B cell (primary cell): ENCODE measurements at regions of chr12 and their contacts with region 1.

Region 1: DNA sequence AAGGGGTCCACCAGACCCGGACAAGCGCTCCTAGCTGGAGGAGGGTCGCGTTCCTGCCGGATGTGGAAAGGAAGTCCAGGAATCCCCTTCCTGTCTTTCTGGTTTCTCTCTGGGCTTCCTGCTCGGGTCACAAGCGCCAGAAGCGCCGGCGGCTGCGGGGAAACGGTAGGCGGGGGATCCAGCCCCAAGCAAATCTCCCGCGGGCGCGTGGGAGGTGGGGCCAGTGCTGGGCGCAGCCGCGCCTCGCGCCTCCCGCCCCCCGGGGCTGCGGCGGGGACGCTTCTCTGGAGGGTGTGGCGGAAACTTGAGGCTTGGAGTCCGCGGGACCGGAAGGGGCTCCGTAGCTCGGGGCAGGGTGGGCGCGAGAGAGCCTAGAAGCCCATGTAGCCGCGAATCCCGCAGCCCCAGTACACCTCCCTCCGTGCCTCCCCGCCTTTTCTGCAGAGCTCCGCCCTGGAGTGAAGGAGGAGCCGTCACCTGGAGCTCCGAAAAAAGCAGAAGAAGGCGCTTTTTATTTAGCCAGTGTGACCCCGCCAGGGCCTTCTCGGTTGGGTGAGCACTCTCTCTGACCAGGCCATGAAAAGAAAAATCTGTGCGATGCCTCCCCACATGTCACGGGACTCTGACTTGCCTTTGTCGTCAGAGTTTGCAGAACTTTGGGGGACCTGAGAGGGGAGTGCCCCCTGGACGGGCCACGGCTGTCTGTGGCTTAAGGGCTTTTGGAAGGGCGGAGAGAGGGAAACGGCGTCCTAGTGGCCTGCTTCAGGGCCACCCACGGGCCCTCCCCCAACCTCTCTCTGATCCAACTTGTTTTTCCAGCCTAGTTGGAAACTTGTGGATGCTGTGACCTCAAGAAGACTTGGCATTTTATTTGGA is 21.4 kb upstream of the CLEC2D start:
- DNase-seq: peak; percentile 97
- ATAC-seq: peak; percentile 71
- H3K4me3 ChIP-seq: peak overlapping the region; percentile 72 to 99 (median 83)
- H3K4me3 Mint-ChIP-seq: peak overlapping the region; percentile 98
- H3K27ac ChIP-seq: peak overlapping the region; percentile 92 to 98
- H3K27ac Mint-ChIP-seq: peak overlapping the region; percentile 86
- H3K4me1 ChIP-seq: peaks cover 34% of the 10 kb centered on the region in 2 donors
- H3K4me1 Mint-ChIP-seq: peaks cover 52% of the 10 kb centered on the region
- H3K27me3 ChIP-seq: no peaks in the 10 kb centered on the region
- H3K27me3 Mint-ChIP-seq: no peaks in the 10 kb centered on the region
- CTCF ChIP-seq: no peak

Region 2: DNA sequence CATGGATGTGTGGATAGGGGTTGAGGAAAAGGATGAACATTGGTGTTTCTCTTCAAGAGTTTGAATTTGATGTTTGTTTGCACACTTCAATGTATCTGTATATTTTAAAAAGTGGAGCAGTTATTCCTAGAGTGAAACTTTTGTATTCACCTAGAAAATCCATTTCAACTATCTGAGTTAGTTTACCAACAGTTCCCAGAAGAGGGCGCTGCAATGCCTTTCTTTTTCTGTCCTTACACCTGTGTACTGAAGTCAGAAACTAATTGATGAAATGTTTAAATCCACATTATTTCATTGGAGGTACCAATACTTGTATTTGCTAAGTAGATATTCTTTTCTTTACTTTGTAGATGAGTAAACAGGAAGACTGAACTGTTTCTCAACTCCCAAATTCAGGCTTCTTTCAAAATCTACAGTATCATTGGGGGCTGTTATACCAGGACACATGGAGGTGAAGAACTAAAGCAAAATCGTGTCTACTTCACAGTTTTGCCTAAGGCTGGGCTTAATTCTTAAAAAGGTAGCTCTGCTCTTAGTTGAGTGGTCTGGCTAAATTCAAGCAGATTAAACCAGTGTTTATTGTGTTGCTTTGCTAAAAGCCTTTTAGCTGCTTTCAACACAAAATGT is 13.8 kb before region 1 on chr12:
- CTCF ChIA-PET with region 1: interaction called, 29 read pairs
- POLR2A ChIA-PET with region 1: interaction called, 13 read pairs
- intact Hi-C with region 1: loop called (anchors 1 kb)
- DNase-seq: peak; percentile 86
- ATAC-seq: peak; percentile 75
- H3K4me3 ChIP-seq: no peak overlapping the region
- H3K4me3 Mint-ChIP-seq: peak overlapping the region; percentile 72
- H3K27ac ChIP-seq: peak overlapping the region; percentile 1 to 82
- H3K27ac Mint-ChIP-seq: peak overlapping the region; percentile 83
- H3K4me1 ChIP-seq: peaks cover 48 to 53% of the 10 kb centered on the region in 2 donors
- H3K4me1 Mint-ChIP-seq: peaks cover 59% of the 10 kb centered on the region
- H3K27me3 ChIP-seq: no peaks in the 10 kb centered on the region
- H3K27me3 Mint-ChIP-seq: no peaks in the 10 kb centered on the region
- CTCF ChIP-seq: peak; percentile 92

Region 3: GRCh38 chr12:9673404-9674225 is 25.6 kb after region 1 on chr12:
- CTCF ChIA-PET with region 1: interaction called, 48 read pairs
- POLR2A ChIA-PET with region 1: interaction called, 36 read pairs
- intact Hi-C with region 1: loop called (anchors 1 kb)
- DNase-seq: peak; percentile 56
- ATAC-seq: peak; percentile 32
- H3K4me3 ChIP-seq: peak overlapping the region in 3 of 5 experiments; percentile 63 to 77 (median 69)
- H3K4me3 Mint-ChIP-seq: peak overlapping the region; percentile 91
- H3K27ac ChIP-seq: peak overlapping the region; percentile 28 to 87
- H3K27ac Mint-ChIP-seq: peak overlapping the region; percentile 86
- H3K4me1 ChIP-seq: peaks cover 60 to 70% of the 10 kb centered on the region in 2 donors
- H3K4me1 Mint-ChIP-seq: peaks cover 77% of the 10 kb centered on the region
- H3K27me3 ChIP-seq: no peaks in the 10 kb centered on the region
- H3K27me3 Mint-ChIP-seq: no peaks in the 10 kb centered on the region
- CTCF ChIP-seq: no peak

Region 4: DNA sequence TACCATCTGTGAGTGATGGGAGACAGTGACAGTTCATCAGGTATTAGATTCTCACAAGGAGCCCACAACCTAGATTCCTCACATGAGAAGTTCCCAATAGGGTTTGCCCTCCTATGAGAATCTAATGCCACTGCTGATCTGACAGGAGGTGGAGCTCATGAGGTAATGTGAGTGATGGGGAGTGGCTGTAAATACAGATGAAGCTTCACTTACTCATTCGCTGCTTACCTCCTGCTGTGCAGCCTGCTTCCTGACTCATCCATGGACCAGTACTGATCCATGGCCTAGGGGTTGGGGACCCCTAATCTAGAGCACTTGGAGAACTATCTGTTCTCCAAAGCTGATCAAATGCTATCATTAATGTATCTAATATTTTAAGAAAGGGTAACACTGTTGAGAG is 39.2 kb after region 1 on chr12:
- CTCF ChIA-PET with region 1: interaction called, 5 read pairs
- POLR2A ChIA-PET with region 1: interaction called, 10 read pairs
- intact Hi-C with region 1: loop called (anchors 5 kb)
- DNase-seq: no peak
- ATAC-seq: no peak
- H3K4me3 ChIP-seq: no peak overlapping the region
- H3K4me3 Mint-ChIP-seq: no peak overlapping the region
- H3K27ac ChIP-seq: peak overlapping the region in 1 of 2 donors; percentile 67
- H3K27ac Mint-ChIP-seq: no peak overlapping the region
- H3K4me1 ChIP-seq: peaks cover 33 to 44% of the 10 kb centered on the region in 2 donors
- H3K4me1 Mint-ChIP-seq: peaks cover 52% of the 10 kb centered on the region
- H3K27me3 ChIP-seq: no peaks in the 10 kb centered on the region
- H3K27me3 Mint-ChIP-seq: no peaks in the 10 kb centered on the region
- CTCF ChIP-seq: no peak

Region 5: GRCh38 chr12:9731797-9732196 is 83.7 kb after region 1 on chr12:
- CTCF ChIA-PET with region 1: interaction called, 6 read pairs
- POLR2A ChIA-PET with region 1: interaction called, 17 read pairs
- intact Hi-C with region 1: loop called (anchors 2 kb)
- DNase-seq: peak; percentile 69
- ATAC-seq: peak; percentile 64
- H3K4me3 ChIP-seq: peak overlapping the region; percentile 35 to 74 (median 44)
- H3K4me3 Mint-ChIP-seq: peak overlapping the region; percentile 92
- H3K27ac ChIP-seq: peak overlapping the region; percentile 83 to 94
- H3K27ac Mint-ChIP-seq: peak overlapping the region; percentile 95
- H3K4me1 ChIP-seq: peaks cover 42 to 58% of the 10 kb centered on the region in 2 donors
- H3K4me1 Mint-ChIP-seq: peaks cover 68% of the 10 kb centered on the region
- H3K27me3 ChIP-seq: no peaks in the 10 kb centered on the region
- H3K27me3 Mint-ChIP-seq: no peaks in the 10 kb centered on the region
- CTCF ChIP-seq: no peak

Region 6: GRCh38 chr12:9741726-9742125 is 93.7 kb after region 1 on chr12:
- CTCF ChIA-PET with region 1: interaction called, 8 read pairs
- POLR2A ChIA-PET with region 1: interaction called, 5 read pairs
- intact Hi-C with region 1: loop called (anchors 1 kb)
- DNase-seq: peak; percentile 86
- ATAC-seq: peak; percentile 67
- H3K4me3 ChIP-seq: peak overlapping the region in 1 of 5 experiments; percentile 29
- H3K4me3 Mint-ChIP-seq: peak overlapping the region; percentile 81
- H3K27ac ChIP-seq: peak overlapping the region; percentile 36 to 66
- H3K27ac Mint-ChIP-seq: peak overlapping the region; percentile 91
- H3K4me1 ChIP-seq: peaks cover 55 to 64% of the 10 kb centered on the region in 2 donors
- H3K4me1 Mint-ChIP-seq: peaks cover 56% of the 10 kb centered on the region
- H3K27me3 ChIP-seq: no peaks in the 10 kb centered on the region
- H3K27me3 Mint-ChIP-seq: no peaks in the 10 kb centered on the region
- CTCF ChIP-seq: no peak

Region 7: GRCh38 chr12:9869307-9870161 is 221.5 kb after region 1 on chr12 and contains the start of gene CLEC2B:
- CTCF ChIA-PET with region 1: interaction called, 3 read pairs
- POLR2A ChIA-PET with region 1: no interaction called
- intact Hi-C with region 1: loop called (anchors 10 kb)
- DNase-seq: peak; percentile 76
- ATAC-seq: peak; percentile 66
- H3K4me3 ChIP-seq: peak within 1 kb of the TSS; percentile 51 to 97 (median 66)
- H3K4me3 Mint-ChIP-seq: peak within 1 kb of the TSS; percentile 92
- H3K27ac ChIP-seq: peak within 1 kb of the TSS; percentile 89 to 90
- H3K27ac Mint-ChIP-seq: peak within 1 kb of the TSS; percentile 99
- H3K4me1 ChIP-seq: peaks cover 14 to 18% of the 10 kb centered on the region in 2 donors
- H3K4me1 Mint-ChIP-seq: peaks cover 41% of the 10 kb centered on the region
- H3K27me3 ChIP-seq: no peaks in the 10 kb centered on the region
- H3K27me3 Mint-ChIP-seq: no peaks in the 10 kb centered on the region
- CTCF ChIP-seq: no peak
- total RNA-seq, gene CLEC2B: 30.5 and 31.6 TPM in 2 replicates

Region 8: GRCh38 chr12:10227648-10228047 is 579.6 kb after region 1 on chr12:
- CTCF ChIA-PET with region 1: no interaction called
- POLR2A ChIA-PET with region 1: no interaction called
- intact Hi-C with region 1: no loop called
- DNase-seq: no peak
- ATAC-seq: no peak
- H3K4me3 ChIP-seq: no peak overlapping the region
- H3K4me3 Mint-ChIP-seq: peak overlapping the region; percentile 13
- H3K27ac ChIP-seq: no peak overlapping the region
- H3K27ac Mint-ChIP-seq: no peak overlapping the region
- H3K4me1 ChIP-seq: peaks cover 2 to 12% of the 10 kb centered on the region in 2 donors
- H3K4me1 Mint-ChIP-seq: peaks cover 8% of the 10 kb centered on the region
- H3K27me3 ChIP-seq: peaks cover 0 to 5% (median 1%) of the 10 kb centered on the region in 4 experiments
- H3K27me3 Mint-ChIP-seq: peaks cover 3% of the 10 kb centered on the region
- CTCF ChIP-seq: no peak